Right ventricle myocardium inferior (tissue), 1 donor: ENCODE measurements at regions of chr13 and their contacts with region 1.

Region 1: DNA sequence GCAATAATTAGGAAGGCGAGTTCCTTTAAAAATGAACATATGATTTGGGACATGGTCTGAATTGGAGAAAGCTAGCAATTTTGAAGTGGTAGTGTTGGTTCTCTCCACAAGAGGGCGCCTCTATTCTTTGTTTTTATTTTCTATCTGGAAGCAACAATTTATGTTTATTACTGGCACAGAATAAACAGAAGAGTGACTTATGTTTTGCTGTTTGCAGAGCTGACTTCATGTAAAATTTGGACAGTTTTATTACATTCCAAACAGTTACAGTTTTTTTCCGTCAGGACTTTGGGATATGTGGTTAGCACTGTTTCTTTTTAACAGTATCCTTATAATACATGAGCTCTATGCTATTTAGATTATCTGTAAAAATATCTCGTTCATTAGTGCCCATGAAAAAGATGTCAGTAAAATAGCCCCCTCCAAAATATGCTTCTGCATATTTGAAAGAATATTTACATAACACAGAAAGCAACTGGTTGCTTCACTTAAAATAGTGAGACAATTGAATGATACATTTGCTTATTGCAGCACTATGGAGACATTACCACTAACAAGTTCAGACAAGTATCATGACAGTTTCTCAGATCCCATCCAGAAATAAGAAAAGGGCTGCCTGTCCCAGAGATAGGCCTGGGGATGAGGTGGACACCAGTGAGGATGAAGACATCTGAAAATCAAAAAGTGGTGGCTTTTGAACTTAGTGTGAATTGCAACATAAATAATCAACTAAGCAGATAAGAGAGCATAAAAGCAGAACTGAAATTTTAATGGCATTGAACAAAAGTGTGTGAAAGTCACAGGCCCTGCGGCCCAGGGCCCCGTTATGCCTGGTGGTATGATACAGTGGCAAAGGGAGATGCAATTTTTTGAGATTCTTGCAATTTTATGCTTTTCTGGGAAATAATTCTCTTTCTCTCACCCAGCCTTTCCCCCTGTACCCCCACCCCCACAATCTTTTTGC is 32.3 kb upstream of the FGF9 start:
- DNase-seq: no peak
- ATAC-seq: no peak

Region 2: GRCh38 chr13:22278336-22278929 is 639.8 kb after region 1 on chr13:
- intact Hi-C with region 1: loop called (anchors 5 kb)
- DNase-seq: no peak
- ATAC-seq: no peak

Region 3: GRCh38 chr13:22757530-22758120 is 1119.0 kb after region 1 on chr13:
- intact Hi-C with region 1: loop called (anchors 5 kb)
- DNase-seq: no peak
- ATAC-seq: no peak